ENCODE measurements at regions of chr1 and their contacts with region 1.

Region 1: GRCh38 chr1:61552630-61553305 is 172.2 kb downstream of the TM2D1 start:
- DNase-seq: no peak
- H3K4me3 ChIP-seq: no peak overlapping the region
- H3K27ac ChIP-seq: no peak overlapping the region
- H3K4me1 ChIP-seq: no peaks in the 10 kb centered on the region
- H3K27me3 ChIP-seq: no peaks in the 10 kb centered on the region; the same call in 1 of the 2 replicates
- CTCF ChIP-seq: no peak
- EP300 ChIP-seq: no peak
- RAD21 ChIP-seq: no peak

Region 2: GRCh38 chr1:61227857-61228550 is 324.8 kb before region 1 on chr1:
- CTCF ChIA-PET with region 1: no interaction called
- POLR2A ChIA-PET with region 1: no interaction called
- DNase-seq: peak; percentile 27
- H3K4me3 ChIP-seq: no peak overlapping the region
- H3K27ac ChIP-seq: peak overlapping the region; percentile 11 to 90; a peak in 3 of 4 replicates
- H3K4me1 ChIP-seq: peaks cover 0 to 26% of the 10 kb centered on the region in 2 experiments
- H3K27me3 ChIP-seq: no peaks in the 10 kb centered on the region
- CTCF ChIP-seq: no peak
- EP300 ChIP-seq: peak; percentile 45 to 51; a peak in 2 of 4 replicates
- RAD21 ChIP-seq: no peak

Region 3: GRCh38 chr1:61536174-61537108 is 16.3 kb before region 1 on chr1:
- CTCF ChIA-PET with region 1: interaction called, 13 read pairs
- POLR2A ChIA-PET with region 1: no interaction called
- DNase-seq: no peak
- H3K4me3 ChIP-seq: no peak overlapping the region
- H3K27ac ChIP-seq: no peak overlapping the region
- H3K4me1 ChIP-seq: no peaks in the 10 kb centered on the region
- H3K27me3 ChIP-seq: no peaks in the 10 kb centered on the region
- CTCF ChIP-seq: no peak
- EP300 ChIP-seq: no peak
- RAD21 ChIP-seq: no peak

Region 4: DNA sequence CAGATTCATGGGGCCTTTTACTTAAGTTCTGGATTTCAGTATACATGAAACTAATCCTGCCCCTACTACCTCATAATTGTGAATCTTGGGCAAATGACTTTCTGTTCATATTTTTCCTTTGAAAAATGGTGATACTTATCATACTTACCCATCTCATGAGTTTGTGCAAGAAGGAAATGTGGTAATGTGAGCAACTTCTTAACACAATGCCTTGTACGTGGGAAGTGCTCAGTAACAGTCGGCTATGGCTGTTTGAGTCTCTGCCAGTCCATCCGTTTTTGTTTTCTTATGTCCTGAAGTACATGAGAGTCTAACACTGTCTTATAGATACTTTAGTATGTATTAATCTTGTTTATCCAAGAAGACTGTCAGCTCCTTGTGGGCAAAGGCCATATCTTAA is 276.0 kb after region 1 on chr1:
- CTCF ChIA-PET with region 1: no interaction called
- POLR2A ChIA-PET with region 1: no interaction called
- DNase-seq: no peak
- H3K4me3 ChIP-seq: no peak overlapping the region
- H3K27ac ChIP-seq: no peak overlapping the region
- H3K4me1 ChIP-seq: no peaks in the 10 kb centered on the region
- H3K27me3 ChIP-seq: no peaks in the 10 kb centered on the region
- CTCF ChIP-seq: no peak
- EP300 ChIP-seq: no peak
- RAD21 ChIP-seq: no peak